HepG2 (cell line): ENCODE measurements at regions of chr17 and their contacts with region 1.

Region 1: GRCh38 chr17:72126563-72127486 is 6.0 kb downstream of the SOX9 start:
- DNase-seq: peak; percentile 95
- ATAC-seq: peak; percentile 64
- H3K4me3 ChIP-seq: no peak overlapping the region
- H3K27ac ChIP-seq: peak overlapping the region; percentile 36
- H3K4me1 ChIP-seq: peaks cover 46% of the 10 kb centered on the region
- H3K27me3 ChIP-seq: no peaks in the 10 kb centered on the region; a peak in 1 of 5 replicates
- CTCF ChIP-seq: 0 out of 2 replicates have a peak, but pooled peaks have one; percentile 12
- EP300 ChIP-seq: peak in 1 of 2 experiments; percentile 71; a peak in 1 of 4 replicates
- POLR2A ChIP-seq: peak; percentile 13 to 50; a peak in 2 of 4 replicates
- RAD21 ChIP-seq: no peak

Region 2: DNA sequence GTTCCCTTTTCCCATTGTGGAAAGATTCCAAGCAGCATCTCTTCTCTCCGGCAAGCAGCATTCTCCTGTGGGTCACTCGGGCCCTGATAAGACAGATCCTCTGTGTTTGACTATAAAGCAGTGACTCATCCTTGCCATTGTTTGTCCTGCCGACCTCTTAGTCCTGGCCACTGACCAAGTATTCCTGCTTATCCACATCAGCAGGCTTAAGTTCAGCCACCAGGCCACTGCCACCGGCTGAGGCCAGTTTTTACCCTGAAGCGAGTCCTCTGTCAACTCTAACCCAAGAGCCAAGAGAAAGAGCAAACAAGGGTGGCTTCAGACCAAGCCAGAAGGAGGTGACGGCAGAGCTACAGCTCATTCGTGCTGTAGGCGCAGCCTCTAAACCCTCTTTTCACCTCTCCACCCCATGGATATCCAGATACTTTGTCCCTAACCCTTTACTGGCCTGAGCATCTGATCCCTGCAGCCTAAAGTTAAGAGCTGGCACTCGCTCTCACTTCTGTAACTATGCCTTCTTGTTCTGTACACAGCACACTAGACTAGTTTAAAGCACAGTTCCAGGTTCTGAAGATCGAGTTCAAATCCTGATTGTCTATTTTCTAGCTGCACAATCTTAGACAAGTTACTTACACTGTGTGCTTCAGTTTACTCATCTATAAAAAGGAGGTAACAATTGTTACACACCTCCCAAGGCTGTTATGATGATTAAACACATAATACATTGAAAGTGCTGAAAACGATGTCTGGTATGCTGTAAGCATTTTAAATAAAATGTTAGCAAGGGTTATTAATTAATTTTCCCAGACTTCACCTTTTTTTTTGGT is 25.0 kb after region 1 on chr17:
- CTCF ChIA-PET with region 1: no interaction called
- POLR2A ChIA-PET with region 1: interaction called, 8 read pairs
- in situ Hi-C with region 1: no loop called
- intact Hi-C with region 1: loop called (anchors 2 kb)
- DNase-seq: peak; percentile 97
- ATAC-seq: peak; percentile 99
- H3K4me3 ChIP-seq: peak overlapping the region in 1 of 3 experiments; percentile 41; a peak in 2 of 6 replicates
- H3K27ac ChIP-seq: peak overlapping the region; percentile 14
- H3K4me1 ChIP-seq: peaks cover 29% of the 10 kb centered on the region
- H3K27me3 ChIP-seq: peaks cover 0 to 6% of the 10 kb centered on the region in 2 experiments; a peak in 1 of 5 replicates
- CTCF ChIP-seq: peak; percentile 27
- EP300 ChIP-seq: peak; percentile 58 to 66
- POLR2A ChIP-seq: no peak
- RAD21 ChIP-seq: peak; percentile 40; the same call in 1 of the 2 replicates

Region 3: GRCh38 chr17:72273673-72274056 is 146.8 kb after region 1 on chr17:
- CTCF ChIA-PET with region 1: no interaction called
- POLR2A ChIA-PET with region 1: no interaction called
- in situ Hi-C with region 1: no loop called
- intact Hi-C with region 1: no loop called
- DNase-seq: no peak
- ATAC-seq: no peak
- H3K4me3 ChIP-seq: no peak overlapping the region
- H3K27ac ChIP-seq: no peak overlapping the region
- H3K4me1 ChIP-seq: peaks cover 8% of the 10 kb centered on the region
- H3K27me3 ChIP-seq: peaks cover 0 to 48% of the 10 kb centered on the region in 2 experiments; a peak in 3 of 5 replicates
- CTCF ChIP-seq: no peak
- EP300 ChIP-seq: no peak
- POLR2A ChIP-seq: no peak
- RAD21 ChIP-seq: no peak

Region 4: GRCh38 chr17:72306037-72306436 is 179.2 kb after region 1 on chr17:
- CTCF ChIA-PET with region 1: no interaction called
- POLR2A ChIA-PET with region 1: no interaction called
- in situ Hi-C with region 1: no loop called
- intact Hi-C with region 1: loop called (anchors 5 kb)
- DNase-seq: no peak
- ATAC-seq: no peak
- H3K4me3 ChIP-seq: peak overlapping the region in 1 of 3 experiments; percentile 14; a peak in 1 of 6 replicates
- H3K27ac ChIP-seq: no peak overlapping the region
- H3K4me1 ChIP-seq: peaks cover 43% of the 10 kb centered on the region
- H3K27me3 ChIP-seq: peaks cover 3 to 4% of the 10 kb centered on the region in 2 experiments; a peak in 4 of 5 replicates
- CTCF ChIP-seq: no peak
- EP300 ChIP-seq: no peak
- POLR2A ChIP-seq: no peak
- RAD21 ChIP-seq: no peak

Region 5: DNA sequence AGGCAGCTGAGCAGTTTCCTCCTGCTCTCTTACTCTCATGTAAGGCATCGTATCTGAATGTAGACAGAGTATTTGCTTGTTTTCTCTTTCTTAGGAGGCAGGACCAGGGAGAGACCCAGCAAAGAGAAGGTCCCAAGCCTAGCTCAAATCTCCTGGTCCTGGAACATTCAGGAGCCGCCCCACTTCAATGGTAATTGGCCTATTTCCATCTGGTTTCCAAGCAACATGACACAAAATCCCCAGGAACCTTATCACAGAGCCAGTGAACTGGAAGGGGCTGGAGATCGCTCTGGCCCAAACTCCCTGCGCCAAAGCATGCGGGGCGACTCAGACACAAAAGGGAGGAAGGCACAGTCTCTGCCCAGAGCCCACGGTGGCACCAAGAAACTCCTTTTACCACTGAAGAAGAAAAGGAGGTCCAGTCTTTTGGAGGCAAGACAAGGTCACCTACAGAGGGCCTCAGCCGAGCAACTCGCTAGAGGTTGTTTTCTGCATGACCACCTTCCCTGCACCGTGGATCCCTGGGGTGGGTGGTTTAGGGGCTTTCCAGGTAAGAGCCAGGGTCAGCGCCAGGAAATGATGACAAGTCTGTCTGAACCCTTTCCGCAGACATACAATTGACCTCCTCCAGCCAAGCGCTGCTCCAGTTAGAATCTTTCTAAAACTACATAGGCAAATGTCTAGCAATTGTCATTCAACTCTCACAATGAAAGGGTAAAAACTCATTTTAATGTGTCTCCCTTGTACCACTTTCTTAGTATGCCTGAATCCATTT is 388.7 kb after region 1 on chr17:
- CTCF ChIA-PET with region 1: no interaction called
- POLR2A ChIA-PET with region 1: interaction called, 23 read pairs
- in situ Hi-C with region 1: loop called (anchors 5 kb)
- intact Hi-C with region 1: loop called (anchors 2 kb)
- DNase-seq: no peak
- ATAC-seq: no peak
- H3K4me3 ChIP-seq: no peak overlapping the region
- H3K27ac ChIP-seq: no peak overlapping the region
- H3K4me1 ChIP-seq: peaks cover 87% of the 10 kb centered on the region
- H3K27me3 ChIP-seq: no peaks in the 10 kb centered on the region
- CTCF ChIP-seq: no peak
- EP300 ChIP-seq: no peak
- POLR2A ChIP-seq: no peak
- RAD21 ChIP-seq: no peak